Caco-2 (cell line): ENCODE measurements at regions of chr1 and their contacts with region 1.

Region 1: GRCh38 chr1:84506002-84506728 is at the starts of genes GNG5 and SPATA1:
- DNase-seq: peak; percentile 94 to 95
- H3K4me3 ChIP-seq: peak within 1 kb of the TSS; percentile 81
- H3K4me3 Mint-ChIP-seq: peak within 1 kb of the TSS; percentile 88
- H3K27ac Mint-ChIP-seq: peak within 1 kb of the TSS; percentile 95
- H3K4me1 ChIP-seq: peaks cover 7% of the 10 kb centered on the region; the same call in 1 of the 2 replicates
- H3K4me1 Mint-ChIP-seq: no peaks in the 10 kb centered on the region
- H3K27me3 ChIP-seq: no peaks in the 10 kb centered on the region
- H3K27me3 Mint-ChIP-seq: no peaks in the 10 kb centered on the region
- CTCF ChIP-seq: no peak
- total RNA-seq, gene GNG5: 83.1 and 93.2 TPM in 2 replicates
- total RNA-seq, gene SPATA1: 0.57 TPM in 1 of 2 replicates, not detected in the other

Region 2: GRCh38 chr1:84253891-84254290 is 252.3 kb before region 1 on chr1:
- CTCF ChIA-PET with region 1: no interaction called
- POLR2A ChIA-PET with region 1: no interaction called
- intact Hi-C with region 1: no loop called
- DNase-seq: no peak
- H3K4me3 ChIP-seq: no peak overlapping the region
- H3K4me3 Mint-ChIP-seq: no peak overlapping the region
- H3K27ac Mint-ChIP-seq: no peak overlapping the region
- H3K4me1 ChIP-seq: no peaks in the 10 kb centered on the region
- H3K4me1 Mint-ChIP-seq: no peaks in the 10 kb centered on the region
- H3K27me3 ChIP-seq: no peaks in the 10 kb centered on the region
- H3K27me3 Mint-ChIP-seq: no peaks in the 10 kb centered on the region
- CTCF ChIP-seq: no peak

Region 3: GRCh38 chr1:84478876-84479868 is 27.0 kb before region 1 on chr1 and contains the start of gene RPF1:
- CTCF ChIA-PET with region 1: interaction called, 5 read pairs
- POLR2A ChIA-PET with region 1: no interaction called
- intact Hi-C with region 1: loop called (anchors 1 kb)
- DNase-seq: peak; percentile 64 to 67
- H3K4me3 ChIP-seq: peak within 1 kb of the TSS; percentile 55
- H3K4me3 Mint-ChIP-seq: peak within 1 kb of the TSS; percentile 98
- H3K27ac Mint-ChIP-seq: peak within 1 kb of the TSS; percentile 99
- H3K4me1 ChIP-seq: no peaks in the 10 kb centered on the region
- H3K4me1 Mint-ChIP-seq: no peaks in the 10 kb centered on the region
- H3K27me3 ChIP-seq: no peaks in the 10 kb centered on the region
- H3K27me3 Mint-ChIP-seq: peaks cover 15% of the 10 kb centered on the region
- CTCF ChIP-seq: no peak
- total RNA-seq, gene RPF1: 15.7 and 18.2 TPM in 2 replicates

Region 4: DNA sequence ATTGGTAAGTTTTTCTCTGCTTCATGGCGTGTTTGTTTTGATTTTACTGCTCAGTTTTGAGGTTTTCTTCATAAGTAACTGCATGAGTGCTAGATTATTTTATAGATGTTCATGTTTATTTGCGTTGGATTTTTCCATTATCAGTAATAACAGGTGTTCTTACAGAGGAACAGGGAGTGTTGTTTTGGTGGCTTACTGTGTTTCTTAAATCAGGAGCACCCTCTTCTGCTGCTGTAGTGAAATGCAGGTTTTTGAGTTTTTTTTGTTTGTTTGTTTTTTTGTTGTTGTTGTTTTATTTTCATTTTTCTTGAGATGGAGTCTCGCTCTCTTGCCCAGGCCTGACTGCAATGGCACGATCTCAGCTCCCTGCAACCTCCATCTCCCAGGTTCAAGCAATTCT is 35.5 kb after region 1 on chr1:
- CTCF ChIA-PET with region 1: no interaction called
- POLR2A ChIA-PET with region 1: no interaction called
- intact Hi-C with region 1: no loop called
- DNase-seq: no peak
- H3K4me3 ChIP-seq: no peak overlapping the region
- H3K4me3 Mint-ChIP-seq: no peak overlapping the region
- H3K27ac Mint-ChIP-seq: no peak overlapping the region
- H3K4me1 ChIP-seq: no peaks in the 10 kb centered on the region
- H3K4me1 Mint-ChIP-seq: no peaks in the 10 kb centered on the region
- H3K27me3 ChIP-seq: no peaks in the 10 kb centered on the region
- H3K27me3 Mint-ChIP-seq: no peaks in the 10 kb centered on the region
- CTCF ChIP-seq: peak in 1 of 2 experiments; percentile 2

Region 5: DNA sequence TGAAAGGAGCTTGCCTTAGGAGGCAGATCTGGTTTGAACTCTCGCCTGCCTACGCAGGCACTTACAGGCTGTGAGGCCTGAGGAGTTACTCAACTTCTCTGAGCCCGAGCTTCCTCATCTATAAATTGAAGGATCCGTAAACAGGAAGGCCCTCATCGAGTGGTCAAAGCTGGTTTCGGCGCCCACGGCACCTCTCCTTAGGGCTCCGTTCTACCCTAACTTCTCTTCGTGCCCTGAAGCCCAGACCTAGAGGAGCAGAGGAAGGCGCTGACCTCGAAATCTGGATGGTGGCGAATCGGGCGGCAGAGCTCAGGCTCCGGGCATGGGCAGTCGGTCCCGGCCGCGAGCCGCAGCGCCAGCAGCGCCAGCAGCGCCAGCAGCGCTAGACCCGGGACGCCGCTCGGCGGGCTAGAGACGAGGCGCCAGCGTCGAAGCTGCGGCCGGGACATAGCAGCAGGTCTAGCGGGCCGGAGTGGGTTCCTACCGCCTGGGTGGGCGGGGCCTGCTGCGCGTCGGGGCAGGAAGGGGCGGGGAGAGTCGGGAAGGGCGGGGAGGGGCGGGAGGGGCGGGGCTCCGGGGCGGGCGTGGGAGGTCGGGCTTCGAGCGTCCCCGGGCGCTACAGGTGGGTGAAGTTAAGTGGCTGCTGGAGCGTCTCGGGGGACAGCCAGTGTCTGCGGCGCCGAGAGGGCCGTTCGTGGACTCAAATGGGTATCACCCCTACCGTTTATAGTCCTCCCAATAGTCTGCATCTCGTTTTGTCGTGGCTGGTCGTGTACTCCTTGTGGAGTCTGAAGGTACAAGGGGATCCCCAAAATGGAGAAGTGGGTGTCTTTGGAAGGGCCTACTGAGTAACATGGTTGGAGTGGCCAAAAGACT is 68.0 kb after region 1 on chr1 and contains the start of gene CTBS:
- CTCF ChIA-PET with region 1: interaction called, 4 read pairs
- POLR2A ChIA-PET with region 1: interaction called, 3 read pairs
- intact Hi-C with region 1: loop called (anchors 2 kb)
- DNase-seq: peak; percentile 82 to 86
- H3K4me3 ChIP-seq: peak within 1 kb of the TSS; percentile 67
- H3K4me3 Mint-ChIP-seq: peak within 1 kb of the TSS; percentile 89
- H3K27ac Mint-ChIP-seq: peak within 1 kb of the TSS; percentile 85
- H3K4me1 ChIP-seq: peaks cover 8% of the 10 kb centered on the region; the same call in 1 of the 2 replicates
- H3K4me1 Mint-ChIP-seq: no peaks in the 10 kb centered on the region
- H3K27me3 ChIP-seq: no peaks in the 10 kb centered on the region
- H3K27me3 Mint-ChIP-seq: peaks cover 2% of the 10 kb centered on the region
- CTCF ChIP-seq: no peak
- total RNA-seq, gene CTBS: 4.7 and 5.4 TPM in 2 replicates

Region 6: GRCh38 chr1:84690397-84691121 is 184.4 kb after region 1 on chr1 and contains the start of gene SSX2IP:
- CTCF ChIA-PET with region 1: no interaction called
- POLR2A ChIA-PET with region 1: no interaction called
- intact Hi-C with region 1: loop called (anchors 2 kb)
- DNase-seq: peak; percentile 97
- H3K4me3 ChIP-seq: peak within 1 kb of the TSS; percentile 76
- H3K4me3 Mint-ChIP-seq: peak within 1 kb of the TSS; percentile 86
- H3K27ac Mint-ChIP-seq: peak within 1 kb of the TSS; percentile 81
- H3K4me1 ChIP-seq: peaks cover 6% of the 10 kb centered on the region
- H3K4me1 Mint-ChIP-seq: peaks cover 17% of the 10 kb centered on the region
- H3K27me3 ChIP-seq: no peaks in the 10 kb centered on the region
- H3K27me3 Mint-ChIP-seq: no peaks in the 10 kb centered on the region
- CTCF ChIP-seq: no peak
- total RNA-seq, gene SSX2IP: 12.7 and 15.3 TPM in 2 replicates

Region 7: DNA sequence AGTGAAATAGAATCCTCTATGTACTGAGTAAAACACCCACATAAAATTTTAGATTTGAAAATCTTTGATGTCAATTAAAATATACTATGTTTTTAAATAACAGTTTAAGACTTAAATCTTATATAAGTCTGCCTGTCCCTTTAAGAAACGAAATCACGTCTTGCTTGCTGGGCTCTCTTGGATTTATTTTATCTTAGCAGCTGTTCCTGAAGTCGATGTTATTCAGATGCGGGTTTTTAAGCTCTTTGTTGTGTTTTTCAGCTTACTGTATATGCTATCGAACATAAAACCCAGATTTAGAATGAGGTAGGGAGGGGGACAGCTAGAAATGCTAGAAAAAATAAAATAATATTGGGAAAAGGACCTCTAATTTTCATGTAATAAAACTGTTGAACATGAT is 195.2 kb after region 1 on chr1:
- CTCF ChIA-PET with region 1: no interaction called
- POLR2A ChIA-PET with region 1: no interaction called
- intact Hi-C with region 1: no loop called
- DNase-seq: no peak
- H3K4me3 ChIP-seq: no peak overlapping the region
- H3K4me3 Mint-ChIP-seq: no peak overlapping the region
- H3K27ac Mint-ChIP-seq: no peak overlapping the region
- H3K4me1 ChIP-seq: no peaks in the 10 kb centered on the region; the same call in 1 of the 2 replicates
- H3K4me1 Mint-ChIP-seq: no peaks in the 10 kb centered on the region
- H3K27me3 ChIP-seq: no peaks in the 10 kb centered on the region
- H3K27me3 Mint-ChIP-seq: peaks cover 3% of the 10 kb centered on the region
- CTCF ChIP-seq: no peak